Mammary epithelial cell (primary cell): ENCODE measurements at regions of chr20 and their contacts with region 1.

Region 1: GRCh38 chr20:35156978-35157377 is 9.8 kb upstream of the EDEM2 start:
- DNase-seq: no peak
- H3K4me3 ChIP-seq: no peak overlapping the region
- H3K27ac ChIP-seq: no peak overlapping the region
- H3K4me1 ChIP-seq: no peaks in the 10 kb centered on the region
- H3K27me3 ChIP-seq: no peaks in the 10 kb centered on the region
- CTCF ChIP-seq: no peak

Region 2: GRCh38 chr20:35179292-35180212 is 22.6 kb after region 1 on chr20:
- CTCF ChIA-PET with region 1: interaction called, 17 read pairs
- dilution Hi-C with region 1: no loop called
- in situ Hi-C with region 1: no loop called
- intact Hi-C with region 1: no loop called
- DNase-seq: no peak
- H3K4me3 ChIP-seq: no peak overlapping the region
- H3K27ac ChIP-seq: no peak overlapping the region
- H3K4me1 ChIP-seq: no peaks in the 10 kb centered on the region
- H3K27me3 ChIP-seq: no peaks in the 10 kb centered on the region
- CTCF ChIP-seq: no peak